Left ventricle myocardium inferior (tissue), 1 donor: ENCODE measurements at regions of chr5 and their contacts with region 1.

Region 1: DNA sequence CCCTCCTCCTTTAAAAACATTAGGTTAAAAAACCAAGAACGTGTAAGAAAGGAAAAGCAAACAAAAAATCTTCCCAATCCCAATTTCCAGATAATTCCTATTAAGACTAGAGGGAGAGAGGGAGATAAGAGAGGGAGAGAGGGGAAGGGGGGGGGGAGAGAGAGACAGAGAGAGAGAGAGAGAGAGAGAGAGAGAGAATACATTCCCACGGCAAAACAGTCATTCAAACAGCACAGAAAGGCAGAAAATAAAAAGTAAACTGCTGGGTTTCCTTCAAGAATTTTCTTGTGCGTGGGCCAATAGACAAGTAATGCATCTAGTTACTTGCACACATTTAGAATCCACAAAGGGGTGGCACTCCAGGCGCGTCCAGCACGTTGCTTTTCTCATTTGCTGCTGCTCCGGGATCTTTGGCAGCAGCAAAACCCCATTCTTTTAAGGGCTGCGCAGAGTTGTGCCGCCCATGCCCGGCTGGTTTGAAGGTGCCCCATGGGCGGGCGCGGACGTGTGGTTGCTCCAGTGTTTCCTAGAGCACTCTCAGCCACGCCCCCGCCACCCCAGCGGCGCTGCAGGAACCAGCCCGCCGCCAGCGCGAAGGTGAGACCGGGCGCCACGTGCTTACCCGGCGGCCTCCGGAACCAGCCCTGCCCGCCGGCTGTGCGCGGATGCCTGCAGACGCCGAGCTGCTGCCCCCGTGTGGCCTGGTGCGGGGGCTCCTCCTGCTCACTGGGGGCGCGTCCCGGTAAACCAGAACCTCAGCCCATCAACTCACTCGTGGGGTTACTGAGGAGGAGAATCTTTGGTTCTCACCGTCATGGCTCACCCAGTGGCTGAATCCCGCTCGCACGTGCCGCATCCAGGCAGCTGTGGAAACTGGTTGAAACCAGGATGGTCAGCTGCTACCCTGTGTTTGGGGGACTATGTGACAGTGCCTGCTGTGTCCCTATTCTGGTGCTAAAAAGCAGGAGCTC is 44.6 kb downstream of the STC2 start:
- DNase-seq: peak; percentile 82
- H3K4me3 ChIP-seq: peak overlapping the region; percentile 58
- H3K27ac ChIP-seq: peak overlapping the region; percentile 79
- H3K4me1 ChIP-seq: peaks cover 29% of the 10 kb centered on the region
- H3K27me3 ChIP-seq: peaks cover 69% of the 10 kb centered on the region
- CTCF ChIP-seq: peak; percentile 87

Region 2: DNA sequence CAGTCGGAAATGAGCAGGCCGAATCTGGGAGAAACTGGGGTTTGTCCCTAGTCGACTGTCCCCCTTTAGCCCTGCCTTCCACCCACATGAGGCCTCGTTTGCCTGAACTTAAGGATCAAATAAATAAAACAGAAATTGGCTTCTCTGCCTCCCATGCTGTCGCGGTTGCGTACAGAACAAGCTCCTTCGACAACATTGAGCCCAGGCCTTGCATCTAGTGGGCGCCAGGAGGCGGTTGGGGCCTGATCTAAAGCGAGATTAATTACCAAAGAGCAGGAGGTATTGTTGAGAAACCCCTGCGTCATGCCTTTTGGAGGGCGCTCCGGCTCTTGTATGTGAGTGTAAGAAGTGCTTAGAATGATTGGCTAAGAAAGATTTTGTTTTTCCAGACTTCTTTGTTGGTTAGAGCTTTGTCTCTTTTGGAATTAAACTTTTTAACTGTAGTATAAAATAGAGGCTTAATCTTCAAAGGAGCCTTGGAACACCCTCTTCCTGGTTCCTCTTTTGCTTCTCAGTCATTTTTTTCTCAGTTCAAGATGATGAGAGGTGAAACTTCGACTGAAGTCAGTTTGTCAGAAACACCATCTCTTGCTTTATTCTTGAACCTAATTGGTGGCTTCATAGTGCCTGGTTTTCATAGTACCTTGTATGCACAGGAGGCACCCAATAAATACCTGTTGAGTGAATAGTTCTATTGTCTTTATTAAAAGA is 299.2 kb before region 1 on chr5:
- intact Hi-C with region 1: loop called (anchors 10 kb)
- DNase-seq: peak; percentile 50
- H3K4me3 ChIP-seq: peak overlapping the region; percentile 93
- H3K27ac ChIP-seq: peak overlapping the region; percentile 95
- H3K4me1 ChIP-seq: peaks cover 62% of the 10 kb centered on the region
- H3K27me3 ChIP-seq: no peaks in the 10 kb centered on the region
- CTCF ChIP-seq: peak; percentile 43

Region 3: DNA sequence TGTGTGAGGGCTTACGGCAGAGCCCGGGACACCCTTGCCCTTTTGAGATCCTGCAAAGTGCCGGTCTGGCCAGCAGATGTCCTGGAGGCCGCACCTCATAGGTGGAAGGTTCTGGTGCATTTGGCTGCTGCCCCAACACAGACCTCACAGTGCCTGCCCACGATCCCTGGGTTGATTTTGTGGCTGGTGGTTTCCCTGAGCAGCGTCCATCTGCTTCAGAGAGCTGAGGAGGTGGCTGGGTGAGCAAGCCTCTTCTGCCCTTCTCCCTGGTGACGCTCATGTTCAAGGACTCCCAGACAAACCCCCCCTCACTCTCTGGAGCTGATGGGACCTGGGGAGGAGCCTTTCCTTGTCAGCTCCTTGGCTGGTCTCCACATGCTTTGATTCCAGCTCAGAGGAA is 120.4 kb before region 1 on chr5:
- intact Hi-C with region 1: loop called (anchors 10 kb)
- DNase-seq: peak; percentile 28
- H3K4me3 ChIP-seq: no peak overlapping the region
- H3K27ac ChIP-seq: peak overlapping the region; percentile 88
- H3K4me1 ChIP-seq: peaks cover 42% of the 10 kb centered on the region
- H3K27me3 ChIP-seq: no peaks in the 10 kb centered on the region
- CTCF ChIP-seq: peak; percentile 18

Region 4: DNA sequence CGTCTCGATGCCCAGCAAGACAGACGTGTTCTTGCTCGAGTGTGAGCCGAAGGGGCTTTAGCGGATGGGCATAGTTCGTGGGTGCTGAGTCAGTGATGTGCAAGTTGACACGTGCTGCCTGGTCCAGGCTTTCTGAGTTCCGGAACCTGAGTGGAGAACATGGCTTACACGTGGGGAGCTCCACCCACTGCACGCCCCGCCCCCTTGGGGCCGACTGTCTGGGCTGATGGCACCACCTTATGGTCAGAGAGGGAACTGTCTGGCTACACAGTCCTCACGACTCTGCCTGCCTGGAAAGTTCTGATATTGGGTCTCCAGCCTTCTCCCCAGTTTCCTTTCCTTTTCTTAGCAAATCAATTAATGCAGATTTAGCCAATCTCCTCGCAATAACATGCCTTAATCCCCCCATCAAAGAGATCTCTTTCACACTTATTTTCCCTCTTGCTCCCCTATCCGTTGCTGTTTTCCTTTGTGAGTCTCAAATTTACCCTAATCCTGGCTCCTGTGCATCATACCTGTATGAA is 48.4 kb after region 1 on chr5:
- intact Hi-C with region 1: no loop called
- DNase-seq: peak; percentile 87
- H3K4me3 ChIP-seq: no peak overlapping the region
- H3K27ac ChIP-seq: no peak overlapping the region
- H3K4me1 ChIP-seq: peaks cover 39% of the 10 kb centered on the region
- H3K27me3 ChIP-seq: peaks cover 31% of the 10 kb centered on the region
- CTCF ChIP-seq: peak; percentile 97